ENCODE measurements at regions of chr7 and their contacts with region 1.

Region 1: GRCh38 chr7:131649003-131649541 is 92.6 kb upstream of the PODXL start:
- DNase-seq: no peak
- ATAC-seq: no peak
- H3K4me3 ChIP-seq: no peak overlapping the region
- H3K27ac ChIP-seq: no peak overlapping the region
- H3K4me1 ChIP-seq: peaks cover 10% of the 10 kb centered on the region; the same call in 1 of the 2 replicates
- H3K27me3 ChIP-seq: no peaks in the 10 kb centered on the region
- CTCF ChIP-seq: no peak

Region 2: GRCh38 chr7:131436384-131436783 is 212.7 kb before region 1 on chr7:
- CTCF ChIA-PET with region 1: no interaction called
- POLR2A ChIA-PET with region 1: no interaction called
- intact Hi-C with region 1: no loop called
- DNase-seq: no peak
- ATAC-seq: no peak
- H3K4me3 ChIP-seq: no peak overlapping the region
- H3K27ac ChIP-seq: no peak overlapping the region
- H3K4me1 ChIP-seq: no peaks in the 10 kb centered on the region
- H3K27me3 ChIP-seq: no peaks in the 10 kb centered on the region
- CTCF ChIP-seq: no peak

Region 3: DNA sequence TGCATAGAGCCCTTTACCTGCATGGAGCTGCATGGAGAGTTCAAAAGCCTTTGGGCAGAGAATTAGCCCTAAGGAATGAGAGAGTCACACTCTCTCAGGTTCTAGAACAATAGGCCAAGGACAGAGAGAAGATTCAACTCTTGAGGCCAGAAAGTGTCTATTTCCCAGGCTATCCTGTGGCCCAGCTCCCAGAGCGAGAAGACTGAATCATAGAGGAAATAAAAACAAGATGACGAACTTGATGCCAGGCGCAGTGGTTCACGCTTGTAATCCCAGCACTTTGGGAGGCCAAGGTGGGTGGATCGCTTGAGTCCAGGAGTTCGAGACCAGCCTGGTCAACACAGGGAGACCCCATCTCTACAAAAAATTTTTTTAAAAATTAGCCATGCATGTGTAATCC is 74.3 kb before region 1 on chr7:
- CTCF ChIA-PET with region 1: interaction called, 11 read pairs
- POLR2A ChIA-PET with region 1: no interaction called
- intact Hi-C with region 1: no loop called
- DNase-seq: no peak
- ATAC-seq: no peak
- H3K4me3 ChIP-seq: no peak overlapping the region
- H3K27ac ChIP-seq: no peak overlapping the region
- H3K4me1 ChIP-seq: no peaks in the 10 kb centered on the region
- H3K27me3 ChIP-seq: no peaks in the 10 kb centered on the region
- CTCF ChIP-seq: no peak

Region 4: DNA sequence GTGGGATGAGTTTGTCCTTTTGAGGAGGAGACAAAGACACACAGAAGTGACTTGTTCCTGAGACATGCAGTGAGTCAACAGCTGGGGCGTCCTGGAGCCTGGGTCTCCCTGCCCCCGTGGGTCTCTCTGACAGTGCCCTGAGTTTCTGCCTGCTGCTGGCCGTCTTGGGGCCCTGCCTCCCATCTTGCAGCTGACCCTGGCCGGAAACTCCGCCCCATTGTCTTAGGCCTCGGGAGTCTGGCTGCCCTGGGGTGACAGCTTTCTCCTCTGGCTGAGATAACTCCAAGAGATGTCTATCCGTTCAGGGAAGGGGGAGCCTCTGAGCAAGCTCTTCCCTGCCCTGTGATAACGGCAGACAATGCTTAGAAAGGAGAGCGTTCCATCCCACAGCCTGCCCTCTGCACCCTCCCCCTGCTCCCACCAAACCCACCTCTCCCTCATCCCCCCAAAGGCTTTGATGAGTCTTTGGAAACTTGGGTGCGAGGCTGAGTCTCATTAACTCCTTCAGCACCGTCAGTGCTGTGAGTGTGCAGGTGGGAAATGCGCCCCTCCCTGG is 23.2 kb before region 1 on chr7:
- CTCF ChIA-PET with region 1: no interaction called
- POLR2A ChIA-PET with region 1: no interaction called
- intact Hi-C with region 1: no loop called
- DNase-seq: peak; percentile 93
- ATAC-seq: peak; percentile 85
- H3K4me3 ChIP-seq: peak overlapping the region; percentile 37; the same call in 1 of the 2 replicates
- H3K27ac ChIP-seq: peak overlapping the region; percentile 86
- H3K4me1 ChIP-seq: peaks cover 55% of the 10 kb centered on the region
- H3K27me3 ChIP-seq: no peaks in the 10 kb centered on the region
- CTCF ChIP-seq: peak; percentile 29; the same call in 1 of the 2 replicates